ENCODE measurements at regions of chr22 and their contacts with region 1.

Region 1: DNA sequence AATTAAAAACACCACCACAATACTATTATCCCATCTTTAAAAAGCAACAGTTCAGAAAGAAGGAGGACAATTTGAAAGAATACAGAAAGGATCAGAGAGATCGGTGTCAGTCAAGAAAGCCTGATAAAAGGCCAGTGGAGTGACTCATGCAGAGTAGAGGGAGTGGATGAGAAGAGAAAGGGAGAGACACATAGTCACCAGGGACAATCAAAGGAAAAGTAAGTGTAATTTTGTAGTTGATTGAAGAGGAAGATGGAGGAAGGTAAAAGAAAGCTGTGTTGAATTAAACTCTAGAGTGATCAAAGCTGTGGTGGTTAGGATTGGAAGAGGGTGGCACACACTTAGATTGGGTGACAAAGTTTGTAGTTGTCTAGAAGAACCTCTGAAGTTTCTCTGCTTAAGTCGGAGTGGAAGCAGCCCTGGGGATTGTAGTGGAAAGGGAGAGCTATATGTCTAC is 14.1 kb downstream of the SPECC1L start:
- DNase-seq: peak; percentile 41
- ATAC-seq: peak; percentile 79
- H3K4me3 Mint-ChIP-seq: peak overlapping the region; percentile 4
- H3K27ac Mint-ChIP-seq: peak overlapping the region; percentile 69
- H3K4me1 Mint-ChIP-seq: peaks cover 60% of the 10 kb centered on the region
- H3K27me3 Mint-ChIP-seq: no peaks in the 10 kb centered on the region
- CTCF ChIP-seq: no peak

Region 2: GRCh38 chr22:24214467-24215285 is 70.1 kb before region 1 on chr22:
- CTCF ChIA-PET with region 1: no interaction called
- POLR2A ChIA-PET with region 1: no interaction called
- intact Hi-C with region 1: no loop called
- DNase-seq: no peak
- ATAC-seq: no peak
- H3K4me3 Mint-ChIP-seq: no peak overlapping the region
- H3K27ac Mint-ChIP-seq: no peak overlapping the region
- H3K4me1 Mint-ChIP-seq: peaks cover 6% of the 10 kb centered on the region
- H3K27me3 Mint-ChIP-seq: no peaks in the 10 kb centered on the region
- CTCF ChIP-seq: no peak

Region 3: GRCh38 chr22:24270638-24271408 is 14.0 kb before region 1 on chr22 and contains the start of gene SPECC1L:
- CTCF ChIA-PET with region 1: interaction called, 3 read pairs
- POLR2A ChIA-PET with region 1: interaction called, 25 read pairs
- intact Hi-C with region 1: no loop called
- DNase-seq: peak; percentile 90
- ATAC-seq: peak; percentile 90
- H3K4me3 Mint-ChIP-seq: peak within 1 kb of the TSS; percentile 81
- H3K27ac Mint-ChIP-seq: peak within 1 kb of the TSS; percentile 86
- H3K4me1 Mint-ChIP-seq: peaks cover 38% of the 10 kb centered on the region
- H3K27me3 Mint-ChIP-seq: no peaks in the 10 kb centered on the region
- CTCF ChIP-seq: no peak
- total RNA-seq, gene SPECC1L: 38.9 to 39.0 TPM

Region 4: GRCh38 chr22:24310969-24311368 is 26.2 kb after region 1 on chr22:
- CTCF ChIA-PET with region 1: no interaction called
- POLR2A ChIA-PET with region 1: no interaction called
- intact Hi-C with region 1: no loop called
- DNase-seq: no peak
- ATAC-seq: no peak
- H3K4me3 Mint-ChIP-seq: no peak overlapping the region
- H3K27ac Mint-ChIP-seq: no peak overlapping the region
- H3K4me1 Mint-ChIP-seq: peaks cover 9% of the 10 kb centered on the region
- H3K27me3 Mint-ChIP-seq: no peaks in the 10 kb centered on the region
- CTCF ChIP-seq: no peak

Region 5: GRCh38 chr22:24391836-24392217 is 107.1 kb after region 1 on chr22:
- CTCF ChIA-PET with region 1: no interaction called
- POLR2A ChIA-PET with region 1: no interaction called
- intact Hi-C with region 1: no loop called
- DNase-seq: no peak
- ATAC-seq: no peak
- H3K4me3 Mint-ChIP-seq: no peak overlapping the region
- H3K27ac Mint-ChIP-seq: peak overlapping the region; percentile 60
- H3K4me1 Mint-ChIP-seq: peaks cover 14% of the 10 kb centered on the region
- H3K27me3 Mint-ChIP-seq: no peaks in the 10 kb centered on the region
- CTCF ChIP-seq: no peak

Region 6: DNA sequence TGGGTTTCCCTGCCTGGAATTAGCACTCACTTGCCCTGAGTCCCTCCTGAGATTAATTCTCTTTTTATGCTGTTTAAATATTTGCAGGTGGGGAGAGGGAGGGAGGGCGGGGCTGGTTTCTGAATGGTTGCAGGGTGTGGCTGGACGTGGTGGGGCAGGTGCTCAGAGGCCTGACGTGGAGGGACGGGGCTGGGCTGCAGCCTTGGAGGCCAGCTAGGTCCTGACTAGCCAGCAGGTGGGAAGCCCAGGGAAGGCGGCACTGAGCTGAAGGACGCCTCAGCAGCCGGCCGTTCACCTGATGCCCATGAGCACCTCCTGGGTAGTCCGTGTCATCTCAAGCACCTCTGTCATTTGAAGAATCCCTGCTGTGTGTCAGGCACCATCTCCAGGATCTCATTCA is 542.5 kb after region 1 on chr22:
- CTCF ChIA-PET with region 1: no interaction called
- POLR2A ChIA-PET with region 1: no interaction called
- intact Hi-C with region 1: no loop called
- DNase-seq: no peak
- ATAC-seq: no peak
- H3K4me3 Mint-ChIP-seq: no peak overlapping the region
- H3K27ac Mint-ChIP-seq: no peak overlapping the region
- H3K4me1 Mint-ChIP-seq: no peaks in the 10 kb centered on the region
- H3K27me3 Mint-ChIP-seq: no peaks in the 10 kb centered on the region
- CTCF ChIP-seq: no peak

Measured in activated CD8-positive, alpha-beta T cell treated with anti-CD3 and anti-CD28 coated beads for 36 hours (primary cell).